Caco-2 (cell line): ENCODE measurements at regions of chr14 and their contacts with region 1.

Region 1: DNA sequence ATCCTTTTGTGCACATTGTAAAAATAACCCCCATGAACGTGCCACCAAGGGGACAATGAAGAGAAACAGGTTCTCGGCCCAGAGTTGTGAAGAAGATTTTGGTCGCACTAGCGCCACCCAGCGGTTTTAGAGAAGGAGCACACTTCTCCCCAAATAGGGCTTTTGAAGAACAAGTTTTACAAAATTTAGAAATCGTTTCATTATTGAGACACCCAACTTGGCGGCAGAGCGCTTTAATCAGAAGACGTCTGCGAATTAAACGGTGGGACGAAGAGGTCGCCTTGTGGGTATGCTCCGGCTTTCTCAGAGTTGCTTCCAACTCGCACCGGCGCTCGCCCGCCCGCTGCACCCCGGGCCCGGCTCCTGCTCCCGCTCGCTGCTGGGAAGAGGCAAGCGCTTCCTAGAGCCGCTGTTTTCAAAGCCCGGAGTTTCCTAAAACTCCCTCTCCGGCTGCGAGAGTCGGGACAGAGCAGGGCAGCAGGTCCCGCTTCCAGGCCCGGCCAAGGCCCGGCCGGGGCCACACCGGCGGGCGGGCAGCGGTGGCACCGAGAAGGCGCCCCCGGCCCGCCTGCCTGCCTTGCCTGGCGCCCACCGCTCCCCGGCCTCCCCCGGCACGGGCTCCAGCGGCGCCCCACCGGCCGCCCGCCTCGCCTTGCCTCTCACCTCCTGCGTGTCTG is 673 bp downstream of the FOXA1 start:
- DNase-seq: peak; percentile 89
- H3K4me3 ChIP-seq: peak overlapping the region; percentile 92
- H3K4me3 Mint-ChIP-seq: peak overlapping the region; percentile 84
- H3K27ac Mint-ChIP-seq: peak overlapping the region; percentile 99
- H3K4me1 ChIP-seq: no peaks in the 10 kb centered on the region
- H3K4me1 Mint-ChIP-seq: no peaks in the 10 kb centered on the region
- H3K27me3 ChIP-seq: no peaks in the 10 kb centered on the region
- H3K27me3 Mint-ChIP-seq: no peaks in the 10 kb centered on the region
- CTCF ChIP-seq: peak; percentile 82 to 86

Region 2: GRCh38 chr14:37246427-37246914 is 347.9 kb before region 1 on chr14:
- CTCF ChIA-PET with region 1: interaction called, 3 read pairs
- POLR2A ChIA-PET with region 1: no interaction called
- intact Hi-C with region 1: loop called (anchors 1 kb)
- DNase-seq: peak in 1 of 2 experiments; percentile 35
- H3K4me3 ChIP-seq: no peak overlapping the region
- H3K4me3 Mint-ChIP-seq: no peak overlapping the region
- H3K27ac Mint-ChIP-seq: no peak overlapping the region
- H3K4me1 ChIP-seq: peaks cover 36% of the 10 kb centered on the region
- H3K4me1 Mint-ChIP-seq: peaks cover 5% of the 10 kb centered on the region
- H3K27me3 ChIP-seq: no peaks in the 10 kb centered on the region
- H3K27me3 Mint-ChIP-seq: no peaks in the 10 kb centered on the region
- CTCF ChIP-seq: peak; percentile 68 to 87

Region 3: DNA sequence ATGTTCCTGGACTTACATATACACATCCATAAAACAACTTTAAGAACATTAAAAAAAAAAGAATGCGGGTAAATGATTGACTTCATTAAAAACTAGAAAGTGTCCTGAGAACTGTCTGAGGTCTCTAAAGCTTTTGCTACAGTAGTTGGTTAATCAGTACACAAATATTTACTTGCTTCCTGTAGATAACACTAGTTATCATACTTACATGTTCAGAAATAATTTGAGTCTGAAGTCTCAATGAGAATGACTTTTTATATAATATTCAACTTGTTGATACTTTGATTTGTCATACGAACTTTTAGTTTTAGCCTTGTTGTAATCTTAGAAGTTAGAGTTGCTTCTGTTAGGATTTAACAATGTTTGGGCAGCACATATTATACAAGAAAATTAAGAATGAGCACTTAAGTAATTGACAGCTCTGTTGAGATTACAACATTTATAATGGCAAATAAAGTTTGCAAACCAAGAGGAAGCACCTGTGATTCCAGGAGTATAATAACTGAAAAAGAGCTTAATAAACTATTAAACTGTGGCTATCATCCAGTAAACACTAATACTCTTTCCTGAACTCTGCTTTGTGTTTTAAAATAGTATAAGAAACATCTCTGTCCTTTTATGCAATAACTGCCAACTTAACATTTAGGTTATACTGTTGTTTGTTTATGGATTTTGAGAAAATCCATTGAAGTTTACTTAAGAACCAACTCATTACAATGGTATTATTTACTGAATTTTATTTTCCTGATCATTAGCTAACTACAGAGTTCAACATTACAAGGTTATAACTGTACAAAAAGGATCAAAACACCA is 265.0 kb before region 1 on chr14:
- CTCF ChIA-PET with region 1: no interaction called
- POLR2A ChIA-PET with region 1: interaction called, 3 read pairs
- intact Hi-C with region 1: loop called (anchors 2 kb)
- DNase-seq: peak in 1 of 2 experiments; percentile 27
- H3K4me3 ChIP-seq: no peak overlapping the region
- H3K4me3 Mint-ChIP-seq: peak overlapping the region; percentile 56
- H3K27ac Mint-ChIP-seq: peak overlapping the region; percentile 65
- H3K4me1 ChIP-seq: peaks cover 23% of the 10 kb centered on the region
- H3K4me1 Mint-ChIP-seq: peaks cover 15% of the 10 kb centered on the region
- H3K27me3 ChIP-seq: no peaks in the 10 kb centered on the region
- H3K27me3 Mint-ChIP-seq: no peaks in the 10 kb centered on the region
- CTCF ChIP-seq: no peak

Region 4: GRCh38 chr14:37583359-37584231 is 10.8 kb before region 1 on chr14:
- CTCF ChIA-PET with region 1: interaction called, 5 read pairs
- POLR2A ChIA-PET with region 1: interaction called, 5 read pairs
- intact Hi-C with region 1: loop called (anchors 1 kb)
- DNase-seq: peak; percentile 92
- H3K4me3 ChIP-seq: peak overlapping the region; percentile 72
- H3K4me3 Mint-ChIP-seq: peak overlapping the region; percentile 78
- H3K27ac Mint-ChIP-seq: peak overlapping the region; percentile 97
- H3K4me1 ChIP-seq: peaks cover 32% of the 10 kb centered on the region
- H3K4me1 Mint-ChIP-seq: peaks cover 23% of the 10 kb centered on the region
- H3K27me3 ChIP-seq: no peaks in the 10 kb centered on the region
- H3K27me3 Mint-ChIP-seq: no peaks in the 10 kb centered on the region
- CTCF ChIP-seq: peak in 1 of 2 experiments; percentile 3

Region 5: DNA sequence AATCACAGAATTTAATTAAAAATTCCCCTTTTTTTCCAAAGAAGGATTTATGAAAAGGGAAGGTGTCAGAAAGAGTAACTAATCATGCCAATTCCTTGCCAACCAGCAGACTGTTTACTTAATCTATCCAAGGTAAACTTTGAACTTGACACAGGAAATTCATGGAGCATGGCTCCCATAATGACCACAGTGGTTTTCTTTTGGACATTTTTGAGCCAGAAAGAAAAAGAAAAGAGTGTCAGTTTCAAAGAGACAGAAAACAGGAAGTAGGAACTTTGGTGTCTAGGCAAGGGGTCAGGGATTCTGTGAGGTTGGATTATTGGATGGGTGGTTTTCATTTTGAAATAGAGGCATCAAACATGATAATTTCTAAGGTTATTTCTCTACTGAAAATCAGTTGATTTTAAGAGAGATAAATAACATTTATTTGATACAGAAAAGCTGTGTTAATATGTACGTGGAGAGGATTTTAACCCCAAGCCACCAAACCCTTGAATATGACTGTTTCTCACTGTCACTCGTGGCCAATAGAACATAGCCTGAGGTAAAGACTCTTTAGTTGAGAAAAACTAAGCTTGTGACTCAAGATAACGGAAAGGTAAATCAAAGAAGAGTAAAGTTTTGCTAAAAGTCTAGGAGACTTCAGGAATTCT is 197.1 kb after region 1 on chr14:
- CTCF ChIA-PET with region 1: no interaction called
- POLR2A ChIA-PET with region 1: no interaction called
- intact Hi-C with region 1: no loop called
- DNase-seq: no peak
- H3K4me3 ChIP-seq: no peak overlapping the region
- H3K4me3 Mint-ChIP-seq: no peak overlapping the region
- H3K27ac Mint-ChIP-seq: no peak overlapping the region
- H3K4me1 ChIP-seq: peaks cover 1% of the 10 kb centered on the region; the same call in 1 of the 2 replicates
- H3K4me1 Mint-ChIP-seq: no peaks in the 10 kb centered on the region
- H3K27me3 ChIP-seq: no peaks in the 10 kb centered on the region
- H3K27me3 Mint-ChIP-seq: no peaks in the 10 kb centered on the region
- CTCF ChIP-seq: no peak

Region 6: GRCh38 chr14:37874429-37875191 is 280.2 kb after region 1 on chr14:
- CTCF ChIA-PET with region 1: interaction called, 6 read pairs
- POLR2A ChIA-PET with region 1: interaction called, 4 read pairs
- intact Hi-C with region 1: loop called (anchors 1 kb)
- DNase-seq: peak; percentile 80 to 90
- H3K4me3 ChIP-seq: no peak overlapping the region
- H3K4me3 Mint-ChIP-seq: peak overlapping the region; percentile 9
- H3K27ac Mint-ChIP-seq: peak overlapping the region; percentile 36
- H3K4me1 ChIP-seq: peaks cover 9% of the 10 kb centered on the region; the same call in 1 of the 2 replicates
- H3K4me1 Mint-ChIP-seq: peaks cover 21% of the 10 kb centered on the region
- H3K27me3 ChIP-seq: no peaks in the 10 kb centered on the region
- H3K27me3 Mint-ChIP-seq: no peaks in the 10 kb centered on the region
- CTCF ChIP-seq: peak; percentile 83 to 87